ENCODE measurements at regions of chr13 and their contacts with region 1.

Region 1: DNA sequence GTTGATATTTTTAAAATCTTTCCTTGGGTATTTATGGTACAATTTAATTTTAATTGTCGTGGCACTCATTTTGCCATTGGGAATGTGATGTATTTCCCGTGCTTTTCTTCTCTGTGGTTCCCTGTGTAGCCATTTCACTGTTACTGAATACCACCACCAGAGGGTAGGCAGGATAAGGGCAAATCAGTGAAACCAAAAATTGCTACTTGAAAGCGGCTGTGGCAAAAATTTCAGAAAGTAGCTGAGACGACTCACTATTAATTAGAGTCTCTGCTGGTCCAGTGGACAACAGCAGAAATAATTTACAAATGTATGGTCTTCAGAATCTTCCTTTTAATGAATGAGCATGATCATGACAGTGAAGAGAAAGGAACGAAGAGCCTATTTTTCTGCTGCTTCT is 34.4 kb upstream of the MIR17HG start:
- DNase-seq: no peak
- ATAC-seq: peak; percentile 86
- H3K4me3 ChIP-seq: 0 out of 2 replicates have a peak overlapping the region, but pooled peaks have one; percentile 26
- H3K27ac ChIP-seq: no peak overlapping the region; the same call in 1 of the 2 replicates
- H3K4me1 ChIP-seq: peaks cover 4% of the 10 kb centered on the region
- H3K27me3 ChIP-seq: no peaks in the 10 kb centered on the region
- CTCF ChIP-seq: peak; percentile 68 to 78 (median 72)
- EP300 ChIP-seq: no peak
- POLR2A ChIP-seq: no peak
- RAD21 ChIP-seq: peak; percentile 92

Region 2: GRCh38 chr13:91017031-91017668 is 296.0 kb before region 1 on chr13:
- CTCF ChIA-PET with region 1: no interaction called
- POLR2A ChIA-PET with region 1: no interaction called
- RAD21 ChIA-PET with region 1: no interaction called
- SMC1A ChIA-PET with region 1: no interaction called
- in situ Hi-C with region 1: no loop called
- intact Hi-C with region 1: no loop called
- DNase-seq: peak; percentile 9
- ATAC-seq: peak; percentile 99
- H3K4me3 ChIP-seq: no peak overlapping the region
- H3K27ac ChIP-seq: no peak overlapping the region
- H3K4me1 ChIP-seq: no peaks in the 10 kb centered on the region
- H3K27me3 ChIP-seq: no peaks in the 10 kb centered on the region
- CTCF ChIP-seq: peak; percentile 73 to 75 (median 74); a peak in 5 of 6 replicates
- EP300 ChIP-seq: no peak
- POLR2A ChIP-seq: no peak
- RAD21 ChIP-seq: peak; percentile 84

Region 3: DNA sequence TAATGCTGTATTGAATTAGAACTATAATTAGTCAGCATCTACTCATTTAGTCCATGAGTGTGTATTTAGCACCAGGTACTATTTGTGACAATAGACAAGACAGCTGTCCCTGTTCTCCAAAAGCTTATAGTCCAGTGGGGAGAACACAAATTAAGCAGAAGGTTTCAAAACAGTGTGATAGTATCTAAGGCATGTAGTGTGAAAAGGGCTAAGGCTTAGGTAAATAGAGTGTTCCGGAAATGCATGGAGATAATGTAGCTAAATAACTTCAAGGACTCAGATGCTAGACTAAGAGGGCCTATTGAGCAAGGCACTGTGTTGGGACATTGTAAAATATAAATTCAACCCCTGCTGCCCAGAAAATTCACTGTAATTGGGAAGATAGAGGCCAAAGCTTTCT is 109.7 kb before region 1 on chr13:
- CTCF ChIA-PET with region 1: no interaction called
- POLR2A ChIA-PET with region 1: no interaction called
- RAD21 ChIA-PET with region 1: no interaction called
- SMC1A ChIA-PET with region 1: no interaction called
- in situ Hi-C with region 1: no loop called
- intact Hi-C with region 1: no loop called
- DNase-seq: no peak
- ATAC-seq: no peak
- H3K4me3 ChIP-seq: no peak overlapping the region
- H3K27ac ChIP-seq: no peak overlapping the region
- H3K4me1 ChIP-seq: no peaks in the 10 kb centered on the region
- H3K27me3 ChIP-seq: no peaks in the 10 kb centered on the region
- CTCF ChIP-seq: no peak
- EP300 ChIP-seq: no peak
- POLR2A ChIP-seq: no peak
- RAD21 ChIP-seq: no peak

Region 4: GRCh38 chr13:91323349-91323748 is 10.2 kb after region 1 on chr13:
- CTCF ChIA-PET with region 1: interaction called, 102 read pairs
- POLR2A ChIA-PET with region 1: interaction called, 3 read pairs
- RAD21 ChIA-PET with region 1: interaction called, 72 read pairs
- SMC1A ChIA-PET with region 1: interaction called, 34 read pairs
- in situ Hi-C with region 1: no loop called
- intact Hi-C with region 1: no loop called
- DNase-seq: no peak
- ATAC-seq: peak; percentile 62
- H3K4me3 ChIP-seq: no peak overlapping the region
- H3K27ac ChIP-seq: no peak overlapping the region
- H3K4me1 ChIP-seq: no peaks in the 10 kb centered on the region
- H3K27me3 ChIP-seq: no peaks in the 10 kb centered on the region
- CTCF ChIP-seq: no peak
- EP300 ChIP-seq: no peak
- POLR2A ChIP-seq: no peak
- RAD21 ChIP-seq: no peak

Region 5: GRCh38 chr13:91348906-91349435 is 35.9 kb after region 1 on chr13:
- CTCF ChIA-PET with region 1: interaction called, 43 read pairs
- POLR2A ChIA-PET with region 1: interaction called, 12 read pairs
- RAD21 ChIA-PET with region 1: interaction called, 60 read pairs
- SMC1A ChIA-PET with region 1: interaction called, 57 read pairs
- in situ Hi-C with region 1: no loop called
- intact Hi-C with region 1: loop called (anchors 1 kb)
- DNase-seq: peak; percentile 43
- ATAC-seq: peak; percentile 54
- H3K4me3 ChIP-seq: peak overlapping the region; percentile 91
- H3K27ac ChIP-seq: peak overlapping the region; percentile 86
- H3K4me1 ChIP-seq: peaks cover 6% of the 10 kb centered on the region; the same call in 1 of the 2 replicates
- H3K27me3 ChIP-seq: no peaks in the 10 kb centered on the region
- CTCF ChIP-seq: peak; percentile 90 to 97 (median 94)
- EP300 ChIP-seq: no peak
- POLR2A ChIP-seq: peak; percentile 6; the same call in 1 of the 2 replicates
- RAD21 ChIP-seq: peak; percentile 52

Region 6: DNA sequence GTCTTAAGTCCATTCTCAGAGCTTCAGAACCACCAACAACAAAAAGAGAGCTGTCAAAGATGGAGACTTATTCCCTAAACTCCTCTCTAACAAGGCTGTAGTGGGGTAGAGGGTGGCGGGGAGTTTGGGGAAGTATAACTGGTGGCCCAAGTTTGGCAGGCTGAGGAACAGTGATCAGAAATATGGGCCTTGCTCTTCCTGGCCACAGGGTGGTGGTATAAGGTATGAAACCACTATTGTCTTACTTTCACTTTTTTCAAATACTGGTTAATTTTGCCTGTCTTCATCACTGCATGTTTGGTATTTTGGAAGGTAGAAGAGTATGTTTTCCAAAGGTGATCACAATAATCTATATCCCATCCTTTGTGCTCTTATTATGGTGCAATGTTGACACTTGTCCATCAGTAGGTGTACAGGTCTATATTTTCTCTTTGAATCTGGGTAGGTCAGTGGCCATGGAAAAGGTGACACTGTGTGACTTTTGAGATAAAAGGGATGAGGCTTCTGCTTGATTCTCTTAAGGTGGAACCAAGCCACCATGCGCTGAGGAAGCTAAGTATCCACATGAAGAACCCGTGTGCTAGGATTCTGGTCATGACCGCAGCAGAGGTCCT is 62.1 kb after region 1 on chr13:
- CTCF ChIA-PET with region 1: interaction called, 53 read pairs
- POLR2A ChIA-PET with region 1: no interaction called
- RAD21 ChIA-PET with region 1: interaction called, 17 read pairs
- SMC1A ChIA-PET with region 1: interaction called, 50 read pairs
- in situ Hi-C with region 1: no loop called
- intact Hi-C with region 1: no loop called
- DNase-seq: no peak
- ATAC-seq: peak; percentile 99
- H3K4me3 ChIP-seq: no peak overlapping the region
- H3K27ac ChIP-seq: no peak overlapping the region
- H3K4me1 ChIP-seq: no peaks in the 10 kb centered on the region
- H3K27me3 ChIP-seq: no peaks in the 10 kb centered on the region
- CTCF ChIP-seq: peak; percentile 61 to 70 (median 68); a peak in 5 of 6 replicates
- EP300 ChIP-seq: no peak
- POLR2A ChIP-seq: no peak
- RAD21 ChIP-seq: peak; percentile 70

Region 7: GRCh38 chr13:91406619-91407018 is 93.5 kb after region 1 on chr13:
- CTCF ChIA-PET with region 1: interaction called, 111 read pairs
- POLR2A ChIA-PET with region 1: interaction called, 3 read pairs
- RAD21 ChIA-PET with region 1: interaction called, 33 read pairs
- SMC1A ChIA-PET with region 1: interaction called, 73 read pairs
- in situ Hi-C with region 1: no loop called
- intact Hi-C with region 1: loop called (anchors 1 kb)
- DNase-seq: no peak
- ATAC-seq: peak; percentile 92
- H3K4me3 ChIP-seq: no peak overlapping the region
- H3K27ac ChIP-seq: no peak overlapping the region
- H3K4me1 ChIP-seq: peaks cover 3% of the 10 kb centered on the region; the same call in 1 of the 2 replicates
- H3K27me3 ChIP-seq: no peaks in the 10 kb centered on the region
- CTCF ChIP-seq: peak; percentile 60 to 68 (median 67); a peak in 5 of 6 replicates
- EP300 ChIP-seq: no peak
- POLR2A ChIP-seq: no peak
- RAD21 ChIP-seq: peak; percentile 77